ENCODE measurements at regions of chr7 and their contacts with region 1.

Region 1: DNA sequence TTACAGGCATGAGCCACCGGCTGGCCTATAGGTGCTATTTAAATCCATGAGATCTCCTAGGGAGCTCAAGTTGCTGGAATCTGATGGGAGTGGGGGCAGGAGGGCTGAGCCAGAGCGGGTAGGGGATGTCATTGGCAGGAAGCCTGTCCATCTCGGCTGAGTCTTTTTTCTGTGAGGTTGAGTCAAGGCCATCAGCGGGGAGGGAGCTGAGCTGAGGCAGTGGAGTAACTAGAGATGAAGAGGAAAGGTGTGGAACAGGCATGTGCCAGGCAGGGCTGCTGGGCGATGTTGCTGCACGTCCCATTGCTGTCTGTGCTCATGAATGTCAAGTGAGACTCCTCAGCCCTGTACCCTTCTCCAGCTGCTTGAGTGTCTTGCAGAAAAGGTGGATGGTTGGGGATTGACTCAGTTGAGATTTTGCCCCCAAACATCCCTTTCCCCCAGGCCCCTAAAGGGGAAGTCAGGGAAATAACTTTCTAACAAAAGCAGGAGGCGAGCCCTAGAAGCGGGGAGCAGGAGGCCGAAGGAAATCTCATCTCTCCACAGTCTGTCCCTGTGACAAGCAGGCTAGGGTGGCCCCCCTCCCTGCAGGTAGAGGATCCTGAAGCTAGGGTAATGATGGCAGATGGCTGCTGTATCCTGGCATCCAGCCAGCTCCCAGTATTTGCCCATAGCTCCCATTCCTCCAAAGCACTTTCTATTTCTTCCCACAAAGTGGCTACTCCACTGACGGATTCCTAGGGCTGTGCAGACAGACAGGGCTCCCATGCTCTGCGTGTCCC is 5.4 kb downstream of the ATP6V1F start:
- DNase-seq: no peak

Region 2: DNA sequence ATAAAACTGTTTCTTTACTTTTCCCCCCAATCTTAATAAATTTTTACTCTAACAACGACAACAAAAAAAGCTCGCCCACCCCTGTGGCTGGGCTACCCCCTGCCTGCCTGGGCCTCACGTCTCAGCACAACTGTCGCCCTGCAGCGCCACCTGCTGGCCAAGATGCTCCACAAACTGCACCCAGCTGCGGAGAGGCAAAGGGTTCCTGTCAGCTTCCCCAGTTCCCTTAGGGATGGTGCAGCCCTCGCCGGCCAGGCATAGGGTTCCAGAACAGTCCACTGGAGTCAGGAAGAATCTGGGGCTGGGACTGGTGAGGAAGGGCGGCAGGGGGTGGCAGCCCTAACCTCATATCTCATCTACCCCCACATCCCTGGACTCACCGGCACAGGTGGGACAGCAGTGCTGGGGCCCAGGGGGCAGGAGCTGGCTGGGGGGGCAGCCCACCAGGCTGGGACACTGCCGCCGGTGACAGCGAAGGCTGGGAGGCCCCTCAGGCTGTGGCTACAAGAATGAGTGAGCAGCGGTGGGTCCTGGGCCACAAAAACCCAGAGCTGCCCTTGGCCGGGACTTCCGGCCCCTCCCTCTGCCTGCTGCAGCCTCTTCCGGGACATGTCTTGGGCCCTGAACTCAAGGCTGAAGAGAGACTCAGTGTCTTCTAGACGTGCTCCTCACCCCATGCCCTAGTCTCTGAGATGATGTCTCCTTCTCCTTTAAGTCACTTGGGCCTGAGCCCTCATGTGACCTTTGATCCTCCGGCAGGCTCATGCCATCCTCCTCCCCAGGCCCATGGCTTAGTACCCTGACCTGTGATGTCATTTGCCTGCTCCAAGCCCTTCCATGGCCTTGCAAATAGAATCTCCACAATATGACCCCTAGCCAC is 15.8 kb after region 1 on chr7:
- CTCF ChIA-PET with region 1: interaction called, 13 read pairs
- POLR2A ChIA-PET with region 1: interaction called, 20 read pairs
- DNase-seq: peak; percentile 92